WTC11 (cell line): ENCODE measurements at regions of chr5 and their contacts with region 1.

Region 1: GRCh38 chr5:24644761-24645160 is at the start of gene CDH10:
- DNase-seq: peak; percentile 90
- ATAC-seq: peak; percentile 100
- H3K4me3 Mint-ChIP-seq: peak within 1 kb of the TSS; percentile 66
- H3K27ac Mint-ChIP-seq: peak within 1 kb of the TSS; percentile 63; the same call in 1 of the 2 replicates
- H3K4me1 Mint-ChIP-seq: peaks cover 33% of the 10 kb centered on the region
- H3K27me3 Mint-ChIP-seq: peaks cover 22% of the 10 kb centered on the region
- CTCF ChIP-seq: no peak
- total RNA-seq, gene CDH10: 0.14 to 0.22 TPM in 2 of 3 replicates, not detected in the other

Region 2: GRCh38 chr5:25006737-25007302 is 362.1 kb after region 1 on chr5:
- CTCF ChIA-PET with region 1: interaction called, 11 read pairs
- POLR2A ChIA-PET with region 1: no interaction called
- DNase-seq: no peak
- ATAC-seq: peak; percentile 71
- H3K4me3 Mint-ChIP-seq: no peak overlapping the region
- H3K27ac Mint-ChIP-seq: no peak overlapping the region
- H3K4me1 Mint-ChIP-seq: peaks cover 5% of the 10 kb centered on the region; the same call in 1 of the 2 replicates
- H3K27me3 Mint-ChIP-seq: no peaks in the 10 kb centered on the region
- CTCF ChIP-seq: no peak